ENCODE measurements at regions of chr12 and their contacts with region 1.

Region 1: DNA sequence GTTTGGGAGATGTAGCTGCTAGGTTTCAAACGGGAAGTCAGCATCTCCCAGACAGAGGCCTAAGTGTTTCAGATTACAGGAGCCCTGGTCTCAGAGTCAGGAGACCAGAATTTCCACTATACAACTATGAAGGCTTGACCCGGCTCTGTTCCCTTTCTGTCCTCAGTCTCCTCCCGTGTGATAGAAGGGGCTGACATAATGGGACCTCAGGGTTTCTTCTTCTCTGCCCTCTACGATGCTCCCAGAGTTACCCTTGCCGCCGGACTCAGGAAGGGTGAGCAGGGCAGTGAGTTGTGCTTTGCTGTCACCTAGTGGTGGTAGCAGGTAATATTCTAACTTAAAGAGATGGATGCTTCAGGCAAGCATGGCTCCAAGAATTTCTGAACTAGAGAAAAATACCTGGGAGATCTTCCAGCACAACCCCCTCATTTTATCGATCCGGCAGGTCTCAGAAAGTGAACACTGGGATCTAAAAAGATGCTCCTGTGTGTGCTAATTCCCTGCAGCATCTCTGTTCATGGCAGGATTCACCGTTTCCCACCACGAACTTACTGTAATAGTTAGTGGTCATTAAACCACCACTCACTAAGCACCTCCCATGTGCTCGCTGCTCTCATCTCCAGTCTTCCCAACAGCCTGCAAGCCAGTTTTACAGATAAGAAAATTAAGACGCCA is 84.4 kb downstream of the VWF start:
- H3K4me3 Mint-ChIP-seq: no peak overlapping the region
- H3K27ac Mint-ChIP-seq: no peak overlapping the region
- H3K4me1 Mint-ChIP-seq: peaks cover 12% of the 10 kb centered on the region
- H3K27me3 Mint-ChIP-seq: peaks cover 5% of the 10 kb centered on the region

Region 2: GRCh38 chr12:5965950-5966383 is 74.1 kb before region 1 on chr12:
- intact Hi-C with region 1: loop called (anchors 2 kb)
- H3K4me3 Mint-ChIP-seq: no peak overlapping the region
- H3K27ac Mint-ChIP-seq: no peak overlapping the region
- H3K4me1 Mint-ChIP-seq: no peaks in the 10 kb centered on the region
- H3K27me3 Mint-ChIP-seq: peaks cover 10% of the 10 kb centered on the region

Region 3: GRCh38 chr12:5988659-5989116 is 51.3 kb before region 1 on chr12:
- intact Hi-C with region 1: loop called (anchors 1 kb)
- H3K4me3 Mint-ChIP-seq: no peak overlapping the region
- H3K27ac Mint-ChIP-seq: no peak overlapping the region
- H3K4me1 Mint-ChIP-seq: peaks cover 5% of the 10 kb centered on the region
- H3K27me3 Mint-ChIP-seq: peaks cover 3% of the 10 kb centered on the region

Measured in dendritic cell treated with granulocyte-macrophage colony-stimulating factor and Interleukin-4, amounts not matched to agents 40 ng/mL and 50 ng/mL, for 4 days (primary cell).